GM12878 (cell line): ENCODE measurements at regions of chr16 and their contacts with region 1.

Region 1: GRCh38 chr16:29926005-29926710 is at the start of gene KCTD13:
- DNase-seq: peak; percentile 66
- ATAC-seq: peak; percentile 96
- H3K4me3 ChIP-seq: peak within 1 kb of the TSS; percentile 97
- H3K27ac ChIP-seq: peak within 1 kb of the TSS; percentile 91
- H3K4me1 ChIP-seq: peaks cover 11% of the 10 kb centered on the region
- H3K27me3 ChIP-seq: no peaks in the 10 kb centered on the region
- CTCF ChIP-seq: no peak
- EP300 ChIP-seq: no peak
- POLR2A ChIP-seq: peak; percentile 97
- RAD21 ChIP-seq: no peak
- polyA plus RNA-seq, gene KCTD13: 3.3 to 3.5 TPM

Region 2: DNA sequence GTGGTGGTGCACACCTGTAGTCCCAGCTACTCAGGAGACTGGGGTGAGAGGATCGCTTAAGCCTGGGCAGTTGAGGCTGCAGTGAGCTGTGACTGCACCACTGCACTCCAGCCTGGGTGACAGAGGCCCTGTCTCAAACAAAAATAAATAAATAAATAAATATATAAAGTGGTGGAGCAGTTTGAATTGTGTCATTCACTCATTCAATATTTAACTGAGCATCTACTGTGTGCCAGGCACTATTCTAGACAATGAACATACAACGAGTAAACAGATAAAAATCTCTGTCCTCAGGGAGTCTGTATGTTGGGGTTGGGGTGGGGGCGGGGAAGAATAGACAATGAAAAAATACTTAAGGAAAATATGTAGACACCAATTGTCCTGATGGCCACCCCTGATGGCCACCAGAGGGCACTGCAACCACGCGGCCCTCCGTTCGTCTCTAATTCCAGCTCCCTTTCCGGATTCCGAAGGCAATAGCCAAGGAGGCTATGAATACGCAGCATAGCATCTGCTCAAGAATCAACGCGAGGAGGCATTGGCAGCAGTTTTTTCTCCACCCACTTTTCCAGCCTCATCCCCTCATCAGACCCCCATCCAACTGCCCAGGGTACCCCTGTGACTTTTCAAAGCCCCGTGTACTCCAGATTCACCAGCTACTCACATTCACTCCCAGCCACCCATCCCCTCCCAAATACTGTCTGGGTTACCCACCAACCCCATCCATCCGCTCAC is 225.7 kb before region 1 on chr16:
- CTCF ChIA-PET with region 1: no interaction called
- POLR2A ChIA-PET with region 1: no interaction called
- RAD21 ChIA-PET with region 1: no interaction called
- SMC1A ChIA-PET with region 1: no interaction called
- in situ Hi-C with region 1: no loop called
- intact Hi-C with region 1: no loop called
- DNase-seq: no peak
- ATAC-seq: peak; percentile 54
- H3K4me3 ChIP-seq: no peak overlapping the region
- H3K27ac ChIP-seq: no peak overlapping the region
- H3K4me1 ChIP-seq: peaks cover 13% of the 10 kb centered on the region
- H3K27me3 ChIP-seq: no peaks in the 10 kb centered on the region
- CTCF ChIP-seq: peak; percentile 69 to 76 (median 73)
- EP300 ChIP-seq: no peak
- POLR2A ChIP-seq: no peak
- RAD21 ChIP-seq: peak; percentile 87

Region 3: DNA sequence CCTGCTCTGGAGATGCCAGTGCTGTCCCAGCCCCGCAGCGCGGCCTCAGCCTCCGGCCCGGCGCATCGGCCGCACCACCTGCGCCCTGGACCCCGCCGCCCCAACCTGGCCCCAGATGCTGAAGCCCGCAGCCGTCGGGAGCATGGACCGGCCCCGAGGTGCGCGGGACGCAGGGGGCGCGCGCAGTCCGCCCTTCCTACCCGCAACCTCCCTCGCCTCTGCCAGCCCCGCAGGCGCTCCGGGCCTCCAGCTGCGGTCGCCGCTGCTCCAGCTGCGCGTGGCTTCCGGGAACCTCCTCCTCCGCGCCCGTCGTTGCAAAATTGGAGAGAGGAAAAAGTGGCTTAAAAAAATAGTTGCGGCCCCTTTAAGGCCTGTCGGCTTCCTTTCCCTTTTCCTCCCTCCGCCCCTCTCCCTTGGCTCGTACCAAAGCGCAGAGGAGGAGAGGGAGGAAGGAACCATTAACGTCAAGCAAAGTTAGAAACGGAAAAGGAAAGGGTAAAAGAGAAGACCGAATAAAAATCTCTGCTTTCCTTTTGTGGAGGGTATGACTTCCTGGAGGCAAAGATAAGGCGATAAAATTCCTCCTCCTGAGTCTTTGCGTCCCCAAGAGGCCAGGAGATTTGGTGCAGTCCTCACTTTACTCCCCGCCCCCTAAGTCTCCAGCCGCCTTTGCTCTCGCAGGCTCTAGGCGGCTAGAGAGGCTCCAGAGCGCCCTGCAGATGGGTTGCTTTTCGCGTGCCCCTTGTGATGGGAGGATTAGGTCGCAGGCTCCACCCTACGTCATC is 63.1 kb before region 1 on chr16 and contains the start of gene CDIPT:
- CTCF ChIA-PET with region 1: no interaction called
- POLR2A ChIA-PET with region 1: no interaction called
- RAD21 ChIA-PET with region 1: no interaction called
- SMC1A ChIA-PET with region 1: no interaction called
- in situ Hi-C with region 1: no loop called
- intact Hi-C with region 1: loop called (anchors 10 kb)
- DNase-seq: peak; percentile 92
- ATAC-seq: peak; percentile 99
- H3K4me3 ChIP-seq: peak within 1 kb of the TSS; percentile 92
- H3K27ac ChIP-seq: peak within 1 kb of the TSS; percentile 95
- H3K4me1 ChIP-seq: peaks cover 4% of the 10 kb centered on the region
- H3K27me3 ChIP-seq: 0 out of 4 replicates have a peak, but pooled peaks cover 0 to 1% of the 10 kb centered on the region in 2 experiments
- CTCF ChIP-seq: peak; percentile 83 to 96 (median 84)
- EP300 ChIP-seq: no peak
- POLR2A ChIP-seq: peak; percentile 59; the same call in 1 of the 2 replicates
- RAD21 ChIP-seq: no peak
- polyA plus RNA-seq, gene CDIPT: 0.87 to 3.5 TPM

Region 4: GRCh38 chr16:29915590-29916247 is 10.4 kb before region 1 on chr16:
- CTCF ChIA-PET with region 1: interaction called, 3 read pairs
- POLR2A ChIA-PET with region 1: interaction called, 11 read pairs
- RAD21 ChIA-PET with region 1: no interaction called
- SMC1A ChIA-PET with region 1: interaction called, 5 read pairs
- in situ Hi-C with region 1: no loop called
- intact Hi-C with region 1: no loop called
- DNase-seq: no peak
- ATAC-seq: no peak
- H3K4me3 ChIP-seq: no peak overlapping the region
- H3K27ac ChIP-seq: no peak overlapping the region
- H3K4me1 ChIP-seq: no peaks in the 10 kb centered on the region
- H3K27me3 ChIP-seq: no peaks in the 10 kb centered on the region
- CTCF ChIP-seq: no peak
- EP300 ChIP-seq: no peak
- POLR2A ChIP-seq: no peak
- RAD21 ChIP-seq: no peak

Region 5: DNA sequence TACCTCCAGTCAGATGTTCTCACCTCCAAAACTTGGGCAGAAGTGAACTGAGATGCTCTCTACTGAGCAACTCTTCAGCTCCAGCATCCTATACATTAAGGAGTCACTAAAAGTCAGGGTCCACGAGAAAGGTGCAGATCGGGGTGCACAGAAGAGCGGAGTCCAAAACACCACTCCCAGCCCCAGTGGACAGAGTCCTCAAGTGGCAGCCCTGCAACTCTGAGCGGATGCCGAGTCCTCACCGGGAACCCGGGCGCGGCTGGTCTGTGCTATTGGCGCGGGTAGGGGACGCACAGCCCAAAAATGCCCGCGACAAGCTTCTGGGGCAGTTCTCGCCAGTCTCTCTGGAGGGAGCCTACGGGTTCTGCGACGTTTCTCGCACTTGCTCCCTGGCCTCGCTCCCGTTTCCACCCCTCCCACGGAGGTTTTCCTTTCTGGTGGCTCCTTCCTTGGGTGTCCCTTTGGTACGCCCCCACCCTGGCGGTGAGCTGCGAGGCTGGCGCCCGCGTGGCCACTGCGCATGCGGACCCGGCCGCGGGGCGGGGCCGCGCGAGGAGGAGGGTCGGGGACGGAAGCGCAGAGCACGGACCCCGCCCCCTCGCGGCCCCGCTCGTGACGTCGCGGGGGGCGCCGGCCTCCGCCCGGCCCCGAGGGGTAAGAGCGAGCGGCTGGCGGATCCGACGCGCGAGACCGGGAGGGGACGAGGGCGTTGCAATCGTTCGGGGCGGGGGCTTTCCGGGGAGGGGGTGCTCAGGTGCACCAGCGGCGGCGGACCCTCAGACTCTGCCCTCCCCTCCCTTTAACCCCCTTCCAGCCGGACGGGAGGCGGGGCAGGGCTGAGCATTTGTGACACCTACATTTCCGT is 35.6 kb after region 1 on chr16 and contains the start of gene TMEM219:
- CTCF ChIA-PET with region 1: interaction called, 6 read pairs
- POLR2A ChIA-PET with region 1: interaction called, 13 read pairs
- RAD21 ChIA-PET with region 1: interaction called, 8 read pairs
- SMC1A ChIA-PET with region 1: interaction called, 4 read pairs
- in situ Hi-C with region 1: no loop called
- intact Hi-C with region 1: loop called (anchors 5 kb)
- DNase-seq: peak; percentile 70
- ATAC-seq: peak; percentile 92
- H3K4me3 ChIP-seq: peak within 1 kb of the TSS; percentile 82
- H3K27ac ChIP-seq: peak within 1 kb of the TSS; percentile 79
- H3K4me1 ChIP-seq: peaks cover 2% of the 10 kb centered on the region; the same call in 1 of the 2 replicates
- H3K27me3 ChIP-seq: no peaks in the 10 kb centered on the region
- CTCF ChIP-seq: peak; percentile 17 to 32 (median 22); a peak in 2 of 6 replicates
- EP300 ChIP-seq: no peak
- POLR2A ChIP-seq: peak; percentile 80
- RAD21 ChIP-seq: no peak
- polyA plus RNA-seq, gene TMEM219: 43.0 to 56.5 TPM

Region 6: DNA sequence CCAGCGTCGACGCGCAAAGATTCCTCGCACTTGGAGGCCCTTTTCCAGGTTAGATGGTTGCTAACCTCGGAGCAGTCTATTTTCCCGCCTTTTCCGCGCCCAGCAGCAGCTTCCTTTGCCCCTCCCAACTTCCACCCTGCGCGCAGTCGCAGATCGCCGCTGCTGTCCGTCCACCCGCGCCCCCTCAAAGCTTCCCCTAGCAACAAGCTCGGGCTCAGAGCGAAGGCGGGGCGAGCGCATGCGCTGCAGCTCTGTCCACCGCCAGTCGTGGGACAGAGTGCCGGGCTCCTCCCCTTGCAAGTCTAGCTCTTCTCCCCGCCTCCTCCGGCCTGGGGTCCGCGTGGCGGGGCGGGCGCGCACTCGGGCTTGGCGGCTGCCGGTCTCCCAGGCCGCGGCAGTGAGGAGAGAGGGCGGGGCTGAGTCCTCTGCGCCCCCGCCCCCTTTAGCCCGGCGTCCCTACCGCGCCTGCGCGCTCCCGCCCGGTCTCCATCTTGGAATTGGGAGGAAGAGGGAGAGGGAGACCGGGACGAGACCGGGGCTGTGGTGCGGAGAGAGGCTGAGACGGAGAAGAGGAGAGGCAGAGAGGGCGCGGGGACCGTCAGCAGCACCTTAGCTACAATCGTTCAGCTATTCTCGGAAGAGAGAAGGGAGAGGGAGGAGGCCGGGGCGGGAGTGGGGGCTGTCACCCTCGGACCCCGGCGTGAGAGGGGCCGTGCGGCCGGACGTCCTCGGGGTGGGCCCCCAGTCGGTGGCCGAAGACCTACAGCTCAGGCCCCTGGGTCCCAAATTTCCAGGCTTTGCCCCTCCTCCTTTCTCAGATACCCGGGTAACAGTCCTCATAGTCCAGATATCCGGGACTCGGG is 47.5 kb after region 1 on chr16 and contains the start of gene TAOK2:
- CTCF ChIA-PET with region 1: interaction called, 5 read pairs
- POLR2A ChIA-PET with region 1: interaction called, 15 read pairs
- RAD21 ChIA-PET with region 1: interaction called, 9 read pairs
- SMC1A ChIA-PET with region 1: interaction called, 5 read pairs
- in situ Hi-C with region 1: no loop called
- intact Hi-C with region 1: no loop called
- DNase-seq: peak; percentile 92
- ATAC-seq: peak; percentile 98
- H3K4me3 ChIP-seq: peak within 1 kb of the TSS; percentile 99
- H3K27ac ChIP-seq: peak within 1 kb of the TSS; percentile 90
- H3K4me1 ChIP-seq: peaks cover 9% of the 10 kb centered on the region
- H3K27me3 ChIP-seq: no peaks in the 10 kb centered on the region
- CTCF ChIP-seq: no peak
- EP300 ChIP-seq: no peak
- POLR2A ChIP-seq: peak; percentile 85
- RAD21 ChIP-seq: no peak
- polyA plus RNA-seq, gene TAOK2: 0.14 to 0.51 TPM

Region 7: GRCh38 chr16:29995911-29996772 is 70.0 kb after region 1 on chr16 and contains the start of gene INO80E:
- CTCF ChIA-PET with region 1: no interaction called
- POLR2A ChIA-PET with region 1: interaction called, 10 read pairs
- RAD21 ChIA-PET with region 1: no interaction called
- SMC1A ChIA-PET with region 1: no interaction called
- in situ Hi-C with region 1: no loop called
- intact Hi-C with region 1: no loop called
- DNase-seq: peak; percentile 88
- ATAC-seq: peak; percentile 96
- H3K4me3 ChIP-seq: peak within 1 kb of the TSS; percentile 81
- H3K27ac ChIP-seq: peak within 1 kb of the TSS; percentile 91
- H3K4me1 ChIP-seq: peaks cover 9% of the 10 kb centered on the region
- H3K27me3 ChIP-seq: no peaks in the 10 kb centered on the region
- CTCF ChIP-seq: no peak
- EP300 ChIP-seq: 0 out of 4 replicates have a peak, but pooled peaks of 1 of the 2 experiments have one; percentile 6
- POLR2A ChIP-seq: peak; percentile 86
- RAD21 ChIP-seq: no peak
- polyA plus RNA-seq, gene INO80E: 0.39 to 0.90 TPM

Region 8: DNA sequence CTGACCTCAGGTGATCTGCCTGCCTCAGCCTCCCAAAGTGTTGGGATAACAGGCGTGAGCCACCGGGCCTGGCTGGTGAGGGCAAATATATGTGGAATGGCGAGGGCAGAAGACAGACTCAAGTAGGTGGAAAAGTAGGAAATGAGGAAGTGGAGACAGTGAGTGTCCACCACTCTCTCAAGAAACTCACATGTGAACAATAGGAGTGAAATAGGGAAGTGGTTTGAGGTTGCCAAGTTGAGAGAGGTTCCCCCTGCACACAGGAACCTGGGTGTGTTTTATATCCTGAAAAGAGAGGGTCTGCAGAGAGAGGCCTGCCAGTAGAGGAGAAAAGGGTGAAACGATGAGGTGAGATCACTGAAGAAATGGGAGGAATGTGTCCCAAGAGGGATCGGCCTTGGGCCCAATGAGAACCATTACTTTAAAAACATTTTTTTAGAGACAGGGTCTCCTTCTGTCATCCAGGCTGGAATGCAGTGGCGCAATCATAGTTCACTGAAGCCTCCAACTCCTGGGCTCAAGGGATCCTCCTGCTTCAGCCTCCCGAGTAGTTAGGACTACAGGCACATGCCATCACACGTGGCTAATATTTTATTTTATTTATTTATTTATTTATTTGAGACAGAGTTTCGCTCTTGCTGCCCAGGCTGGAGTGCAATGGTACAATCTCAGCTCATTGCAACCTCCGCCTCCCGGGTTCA is 240.2 kb after region 1 on chr16:
- CTCF ChIA-PET with region 1: no interaction called
- POLR2A ChIA-PET with region 1: no interaction called
- RAD21 ChIA-PET with region 1: no interaction called
- SMC1A ChIA-PET with region 1: no interaction called
- in situ Hi-C with region 1: no loop called
- intact Hi-C with region 1: no loop called
- DNase-seq: peak; percentile 73
- ATAC-seq: peak; percentile 99
- H3K4me3 ChIP-seq: no peak overlapping the region
- H3K27ac ChIP-seq: no peak overlapping the region; the same call in 1 of the 2 replicates
- H3K4me1 ChIP-seq: peaks cover 25% of the 10 kb centered on the region
- H3K27me3 ChIP-seq: no peaks in the 10 kb centered on the region
- CTCF ChIP-seq: no peak
- EP300 ChIP-seq: peak; percentile 52 to 95; a peak in 2 of 4 replicates
- POLR2A ChIP-seq: no peak
- RAD21 ChIP-seq: no peak